Astrocyte of the cerebellum (primary cell): ENCODE measurements at regions of chr20 and their contacts with region 1.

Region 1: GRCh38 chr20:17759241-17759848 is 59.6 kb downstream of the BANF2 start:
- DNase-seq: no peak
- H3K4me3 ChIP-seq: no peak overlapping the region
- CTCF ChIP-seq: no peak

Region 2: DNA sequence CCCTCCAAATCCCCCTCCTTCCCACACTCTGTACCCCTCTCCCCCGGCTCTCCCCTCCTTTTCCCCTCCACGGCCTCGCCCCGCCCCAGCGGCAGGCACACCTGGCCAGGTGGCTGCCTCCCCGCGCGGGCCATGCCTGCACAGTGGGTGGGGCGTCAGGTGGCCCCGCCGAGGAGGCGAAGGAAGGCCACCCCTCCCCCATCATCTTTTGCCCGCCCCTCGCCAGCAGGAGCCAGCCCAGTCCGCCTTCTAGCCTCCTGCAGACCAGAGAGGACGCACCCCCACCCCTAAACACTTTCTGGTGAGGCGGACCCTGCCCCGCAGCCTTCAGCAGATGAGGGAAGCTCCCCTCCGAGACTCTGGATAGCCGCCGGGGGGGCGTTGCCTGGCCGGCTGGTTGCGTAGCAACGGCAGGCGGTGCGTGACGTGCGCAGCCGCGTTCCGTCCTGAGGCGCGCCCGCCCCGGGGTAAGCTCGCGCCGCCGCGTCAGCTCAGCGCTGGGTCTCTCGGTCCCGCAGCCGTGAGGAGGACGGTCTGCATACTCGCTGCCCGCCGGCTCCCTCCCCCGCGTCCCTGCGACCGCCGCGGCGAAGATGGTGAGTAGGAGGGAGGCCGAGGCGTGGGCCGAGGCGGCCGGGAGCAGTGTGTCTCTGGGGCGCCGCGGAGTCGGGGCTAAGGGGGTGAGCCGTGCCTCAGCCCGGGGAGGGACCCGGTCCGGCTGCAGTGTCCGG is 189.6 kb before region 1 on chr20 and contains the start of gene DSTN:
- in situ Hi-C with region 1: no loop called
- DNase-seq: peak; percentile 88
- H3K4me3 ChIP-seq: peak within 1 kb of the TSS; percentile 96
- CTCF ChIP-seq: no peak

Region 3: GRCh38 chr20:17710379-17711266 is 48.7 kb before region 1 on chr20:
- in situ Hi-C with region 1: loop called (anchors 5 kb)
- DNase-seq: no peak
- H3K4me3 ChIP-seq: no peak overlapping the region
- CTCF ChIP-seq: no peak

Region 4: DNA sequence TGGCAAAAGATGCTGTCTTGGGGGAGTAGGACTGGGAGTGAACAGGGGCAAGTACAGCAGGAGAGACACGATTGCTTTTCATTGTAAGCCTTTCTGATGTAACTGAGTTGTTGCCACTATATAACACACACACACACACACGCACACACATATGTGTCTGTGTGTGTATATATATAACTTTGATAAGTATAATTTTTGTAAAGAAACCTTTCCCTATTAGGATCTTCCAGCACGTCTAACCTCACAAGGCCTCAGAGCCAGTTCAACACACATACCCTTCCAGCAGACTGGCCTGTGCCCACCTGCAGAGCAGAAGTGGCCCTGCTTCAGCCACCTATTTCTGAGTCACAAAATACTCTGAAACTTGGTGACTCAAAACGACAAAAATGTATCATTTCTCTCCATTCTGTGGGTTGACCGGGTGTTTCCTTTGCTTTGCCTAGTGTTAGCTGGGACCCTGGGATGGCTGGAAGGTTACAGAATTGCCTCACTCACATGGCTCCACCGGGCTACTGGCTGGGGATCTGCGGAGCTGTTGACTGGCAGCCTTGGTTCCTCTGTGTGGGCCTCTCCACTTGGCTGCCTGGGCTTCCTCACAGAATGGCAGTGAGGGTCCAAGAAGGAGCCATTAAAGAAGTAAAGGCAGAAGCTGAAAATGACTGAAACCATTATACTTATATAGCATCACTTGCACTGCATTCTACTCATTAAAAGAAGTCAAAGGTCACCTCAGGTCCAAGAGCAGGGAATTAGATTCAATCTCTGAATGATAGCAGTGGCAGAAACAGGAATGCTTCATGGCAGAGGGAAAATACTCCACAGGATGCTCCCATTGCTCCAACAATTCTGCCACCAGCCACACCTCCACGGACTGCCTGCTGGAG is 66.9 kb after region 1 on chr20:
- in situ Hi-C with region 1: no loop called
- DNase-seq: no peak
- H3K4me3 ChIP-seq: no peak overlapping the region
- CTCF ChIP-seq: no peak